Ascending aorta (tissue), 2 donors: ENCODE measurements at regions of chr11 and their contacts with region 1.

Region 1: DNA sequence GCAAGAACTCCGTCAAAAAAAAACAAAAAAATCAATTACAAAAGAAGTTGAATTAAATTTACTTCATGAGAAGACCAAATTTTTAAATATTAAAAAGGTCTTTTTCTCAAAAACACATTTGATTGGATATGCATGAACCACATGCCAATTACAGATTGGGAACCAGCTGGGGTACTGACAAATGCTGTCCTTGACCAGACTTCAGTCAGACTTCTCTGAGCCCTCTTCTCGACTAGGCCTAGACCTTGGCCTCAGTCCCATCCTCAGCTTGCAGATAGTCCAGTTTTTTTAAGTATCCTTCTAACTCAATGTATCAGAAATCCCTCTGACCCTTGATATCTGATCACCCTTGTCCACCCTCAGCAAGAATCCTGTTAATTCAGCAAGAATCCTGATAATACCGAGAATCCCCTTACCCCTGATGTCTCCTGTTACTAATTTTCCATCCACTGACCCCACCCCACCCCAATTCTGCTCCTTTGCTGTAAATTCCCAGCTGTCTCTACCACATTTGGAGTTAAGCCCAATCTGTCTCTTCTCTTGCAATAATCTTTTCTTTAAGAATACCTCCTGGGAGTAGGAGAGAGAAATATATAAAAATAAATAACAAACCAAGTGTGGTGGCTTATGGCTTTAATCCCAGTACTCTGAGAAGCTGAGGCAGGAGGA is 30.9 kb downstream of the OR4D9 start:
- DNase-seq: no peak
- H3K4me3 ChIP-seq: no peak overlapping the region
- H3K27ac ChIP-seq: no peak overlapping the region
- H3K4me1 ChIP-seq: no peaks in the 10 kb centered on the region
- H3K27me3 ChIP-seq: no peaks in the 10 kb centered on the region
- CTCF ChIP-seq: no peak

Region 2: GRCh38 chr11:59680287-59681154 is 138.2 kb after region 1 on chr11:
- intact Hi-C with region 1: loop called (anchors 2 kb)
- DNase-seq: no peak
- H3K4me3 ChIP-seq: no peak overlapping the region
- H3K27ac ChIP-seq: no peak overlapping the region
- H3K4me1 ChIP-seq: no peaks in the 10 kb centered on the region
- H3K27me3 ChIP-seq: no peaks in the 10 kb centered on the region
- CTCF ChIP-seq: peak; percentile 27 to 57 (median 41)